Mammary epithelial cell (primary cell): ENCODE measurements at regions of chr11 and their contacts with region 1.

Region 1: DNA sequence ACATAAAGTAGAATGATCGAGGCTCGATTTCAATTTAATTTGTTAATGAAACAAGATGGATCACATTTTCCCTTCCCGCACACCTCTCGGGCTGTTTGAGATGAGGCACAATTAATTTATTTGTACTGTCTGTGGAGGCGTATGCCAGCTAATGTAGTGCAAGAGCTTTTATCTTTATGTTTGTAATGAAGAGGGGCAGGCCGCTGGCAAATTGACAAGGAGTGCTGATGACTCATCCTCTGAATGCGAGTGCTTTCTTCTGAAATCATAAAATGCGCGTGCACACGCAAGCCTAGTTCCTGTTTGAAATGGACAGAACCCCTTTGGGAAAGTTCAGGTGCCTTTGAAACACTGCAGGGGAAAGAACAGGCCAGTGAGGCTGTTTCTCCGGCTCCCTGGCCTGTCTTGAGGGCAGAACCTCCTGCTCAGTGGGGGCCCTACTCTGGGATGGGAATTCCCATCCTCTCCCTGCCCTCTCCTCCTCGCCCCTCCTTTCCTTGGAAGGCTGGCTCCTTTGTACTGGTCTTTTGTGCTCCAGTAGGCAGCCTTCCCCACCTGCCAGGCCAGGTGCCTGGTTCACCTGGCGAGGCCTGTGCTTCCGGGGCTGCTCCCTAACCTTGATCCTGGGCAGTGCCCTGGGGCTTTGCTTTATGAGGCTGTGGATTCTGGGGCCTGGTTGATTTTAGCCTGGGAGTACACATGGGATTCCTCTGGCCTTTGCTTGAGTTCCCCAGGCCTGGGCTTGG is 50.3 kb downstream of the TEAD1 start:
- DNase-seq: peak; percentile 92
- H3K4me3 ChIP-seq: peak overlapping the region in 2 of 3 experiments; percentile 4 to 15
- H3K27ac ChIP-seq: peak overlapping the region; percentile 90
- H3K4me1 ChIP-seq: peaks cover 52% of the 10 kb centered on the region
- H3K27me3 ChIP-seq: no peaks in the 10 kb centered on the region
- CTCF ChIP-seq: no peak

Region 2: GRCh38 chr11:12318791-12319438 is 405.6 kb before region 1 on chr11:
- CTCF ChIA-PET with region 1: no interaction called
- dilution Hi-C with region 1: no loop called
- in situ Hi-C with region 1: no loop called
- intact Hi-C with region 1: no loop called
- DNase-seq: no peak
- H3K4me3 ChIP-seq: no peak overlapping the region
- H3K27ac ChIP-seq: no peak overlapping the region
- H3K4me1 ChIP-seq: no peaks in the 10 kb centered on the region
- H3K27me3 ChIP-seq: no peaks in the 10 kb centered on the region
- CTCF ChIP-seq: no peak

Region 3: GRCh38 chr11:12784987-12785386 is 60.5 kb after region 1 on chr11:
- CTCF ChIA-PET with region 1: no interaction called
- dilution Hi-C with region 1: loop called (anchors 5 kb)
- in situ Hi-C with region 1: no loop called
- intact Hi-C with region 1: no loop called
- DNase-seq: no peak
- H3K4me3 ChIP-seq: no peak overlapping the region
- H3K27ac ChIP-seq: no peak overlapping the region
- H3K4me1 ChIP-seq: peaks cover 4% of the 10 kb centered on the region
- H3K27me3 ChIP-seq: no peaks in the 10 kb centered on the region
- CTCF ChIP-seq: no peak

Region 4: GRCh38 chr11:12813371-12814225 is 89.1 kb after region 1 on chr11:
- CTCF ChIA-PET with region 1: no interaction called
- dilution Hi-C with region 1: loop called (anchors 5 kb)
- in situ Hi-C with region 1: no loop called
- intact Hi-C with region 1: no loop called
- DNase-seq: peak; percentile 78
- H3K4me3 ChIP-seq: no peak overlapping the region
- H3K27ac ChIP-seq: peak overlapping the region; percentile 1
- H3K4me1 ChIP-seq: peaks cover 71% of the 10 kb centered on the region
- H3K27me3 ChIP-seq: no peaks in the 10 kb centered on the region
- CTCF ChIP-seq: peak; percentile 18 to 56